Tibial artery (tissue), 4 donors: ENCODE measurements at regions of chr7 and their contacts with region 1.

Region 1: DNA sequence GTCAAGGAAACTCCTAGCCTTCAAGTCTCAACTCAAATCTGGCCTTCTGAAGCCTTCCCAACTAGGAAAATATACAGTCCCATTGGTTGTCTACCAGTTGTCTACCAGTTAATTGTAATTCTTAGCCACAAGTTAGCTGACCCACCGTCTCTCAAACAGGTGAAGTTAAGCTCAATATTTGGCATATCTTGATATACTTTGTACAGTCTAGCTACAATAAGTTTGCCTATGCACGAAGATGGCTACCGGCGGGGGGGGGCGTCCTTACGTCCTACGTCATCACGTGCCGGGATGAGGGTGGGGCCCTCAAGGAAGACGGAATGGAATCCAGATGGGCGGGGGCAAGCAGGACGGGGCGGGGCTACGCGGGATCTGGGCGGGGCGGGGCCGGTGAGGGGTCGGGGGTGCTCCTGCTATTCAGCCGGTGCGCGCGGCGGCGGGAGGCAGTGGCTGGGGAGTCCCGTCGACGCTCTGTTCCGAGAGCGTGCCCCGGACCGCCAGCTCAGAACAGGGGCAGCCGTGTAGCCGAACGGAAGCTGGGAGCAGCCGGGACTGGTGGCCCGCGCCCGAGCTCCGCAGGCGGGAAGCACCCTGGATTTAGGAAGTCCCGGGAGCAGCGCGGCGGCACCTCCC is at the start of gene AHR:
- DNase-seq: peak; percentile 93 to 96
- H3K4me3 ChIP-seq: peak within 1 kb of the TSS; percentile 88 to 100
- H3K27ac ChIP-seq: peak within 1 kb of the TSS; percentile 94 to 99
- H3K4me1 ChIP-seq: peaks cover 0 to 38% (median 0%) of the 10 kb centered on the region in 4 donors
- H3K27me3 ChIP-seq: no peaks in the 10 kb centered on the region
- CTCF ChIP-seq: no peak

Region 2: DNA sequence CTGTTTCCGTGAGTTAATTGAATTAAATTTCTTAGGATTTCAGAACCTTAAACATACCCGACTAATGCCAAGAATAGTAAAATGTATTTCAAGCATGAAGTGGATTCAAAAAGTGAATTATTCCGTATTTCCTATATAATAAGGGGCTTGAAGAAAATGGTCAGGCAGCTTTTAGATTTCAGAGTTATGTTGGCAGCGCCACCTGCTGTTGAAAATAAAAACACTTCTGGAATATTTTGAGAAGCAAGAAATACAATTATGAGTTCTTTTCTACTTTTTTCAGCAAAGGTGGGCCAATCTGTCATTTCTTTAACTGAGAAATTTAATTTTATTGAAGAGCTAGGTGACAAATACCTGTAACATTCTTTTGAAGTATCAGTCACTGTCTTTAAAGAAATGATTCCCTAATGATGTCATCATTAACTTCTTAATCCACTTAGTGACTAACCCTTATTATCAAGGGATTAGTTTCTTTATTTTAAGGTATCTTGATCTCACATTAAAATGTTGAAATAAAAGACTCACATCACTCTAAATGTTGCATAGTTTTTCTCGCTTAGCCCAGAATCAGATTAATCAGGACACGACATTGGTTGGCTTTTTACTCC is 379.9 kb before region 1 on chr7:
- intact Hi-C with region 1: no loop called
- DNase-seq: no peak
- H3K4me3 ChIP-seq: no peak overlapping the region
- H3K27ac ChIP-seq: no peak overlapping the region
- H3K4me1 ChIP-seq: no peaks in the 10 kb centered on the region
- H3K27me3 ChIP-seq: no peaks in the 10 kb centered on the region
- CTCF ChIP-seq: peak; percentile 62 to 72

Region 3: GRCh38 chr7:16978358-16979244 is 319.7 kb before region 1 on chr7:
- intact Hi-C with region 1: loop called (anchors 10 kb)
- DNase-seq: no peak
- H3K4me3 ChIP-seq: no peak overlapping the region
- H3K27ac ChIP-seq: no peak overlapping the region
- H3K4me1 ChIP-seq: peaks cover 0 to 12% (median 5%) of the 10 kb centered on the region in 4 donors
- H3K27me3 ChIP-seq: no peaks in the 10 kb centered on the region
- CTCF ChIP-seq: no peak

Region 4: GRCh38 chr7:17130281-17131059 is 167.9 kb before region 1 on chr7:
- intact Hi-C with region 1: no loop called
- DNase-seq: no peak
- H3K4me3 ChIP-seq: no peak overlapping the region
- H3K27ac ChIP-seq: no peak overlapping the region
- H3K4me1 ChIP-seq: no peaks in the 10 kb centered on the region
- H3K27me3 ChIP-seq: no peaks in the 10 kb centered on the region
- CTCF ChIP-seq: no peak

Region 5: GRCh38 chr7:17339139-17339538 is 40.8 kb after region 1 on chr7:
- intact Hi-C with region 1: no loop called
- DNase-seq: no peak
- H3K4me3 ChIP-seq: no peak overlapping the region
- H3K27ac ChIP-seq: peak overlapping the region in 1 of 2 donors; percentile 5
- H3K4me1 ChIP-seq: peaks cover 0 to 40% (median 9%) of the 10 kb centered on the region in 4 donors
- H3K27me3 ChIP-seq: no peaks in the 10 kb centered on the region
- CTCF ChIP-seq: no peak

Region 6: DNA sequence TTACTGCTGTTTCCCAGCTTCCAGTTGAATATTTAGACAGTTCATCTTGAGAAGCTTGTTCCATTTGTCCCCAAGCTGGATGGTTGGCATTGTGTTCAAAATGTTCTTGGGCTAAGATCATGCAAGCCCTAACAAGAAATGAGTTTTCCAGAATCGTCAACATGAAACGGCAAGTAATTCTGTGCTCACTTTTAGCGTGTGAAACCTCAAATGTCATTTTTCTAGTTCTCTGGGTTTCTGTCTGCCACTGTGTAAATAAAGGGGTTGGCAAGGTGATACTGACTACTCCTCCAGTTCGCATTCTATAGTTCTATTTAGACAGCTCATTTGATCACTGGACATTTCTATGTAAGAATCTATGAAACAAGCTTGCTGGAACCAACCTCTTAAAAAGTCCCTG is 194.1 kb after region 1 on chr7:
- intact Hi-C with region 1: no loop called
- DNase-seq: no peak
- H3K4me3 ChIP-seq: no peak overlapping the region
- H3K27ac ChIP-seq: no peak overlapping the region
- H3K4me1 ChIP-seq: peaks cover 0 to 5% (median 0%) of the 10 kb centered on the region in 4 donors
- H3K27me3 ChIP-seq: no peaks in the 10 kb centered on the region
- CTCF ChIP-seq: no peak